ENCODE measurements at regions of chr2 and their contacts with region 1.

Region 1: DNA sequence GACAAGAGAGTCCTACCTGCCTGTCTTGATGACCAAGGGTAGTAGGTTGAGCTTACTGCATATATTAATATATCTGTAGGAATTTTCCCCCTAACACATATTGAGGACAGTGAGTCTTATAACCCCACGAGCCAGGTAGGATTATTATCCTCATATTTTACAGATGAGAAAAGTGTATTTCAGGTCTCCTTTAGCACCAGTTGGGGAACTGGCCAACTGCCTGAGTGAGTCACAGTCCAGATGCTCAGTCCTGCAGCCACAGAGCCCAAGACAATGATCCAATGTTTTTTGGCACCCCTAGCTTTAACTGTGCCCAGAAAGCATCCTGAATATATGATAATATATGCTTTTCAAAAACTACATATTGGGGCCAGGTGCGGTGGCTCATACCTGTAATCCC is 30.8 kb upstream of the GLS start:
- DNase-seq: no peak
- H3K4me3 Mint-ChIP-seq: no peak overlapping the region
- H3K27ac Mint-ChIP-seq: no peak overlapping the region
- H3K4me1 Mint-ChIP-seq: peaks cover 15% of the 10 kb centered on the region
- H3K27me3 Mint-ChIP-seq: peaks cover 1% of the 10 kb centered on the region

Region 2: GRCh38 chr2:190636373-190636772 is 213.4 kb before region 1 on chr2:
- CTCF ChIA-PET with region 1: no interaction called
- POLR2A ChIA-PET with region 1: no interaction called
- intact Hi-C with region 1: no loop called
- DNase-seq: no peak
- H3K4me3 Mint-ChIP-seq: no peak overlapping the region
- H3K27ac Mint-ChIP-seq: no peak overlapping the region
- H3K4me1 Mint-ChIP-seq: peaks cover 10% of the 10 kb centered on the region
- H3K27me3 Mint-ChIP-seq: no peaks in the 10 kb centered on the region

Region 3: GRCh38 chr2:190685333-190685732 is 164.4 kb before region 1 on chr2:
- CTCF ChIA-PET with region 1: no interaction called
- POLR2A ChIA-PET with region 1: no interaction called
- intact Hi-C with region 1: no loop called
- DNase-seq: no peak
- H3K4me3 Mint-ChIP-seq: no peak overlapping the region
- H3K27ac Mint-ChIP-seq: no peak overlapping the region
- H3K4me1 Mint-ChIP-seq: peaks cover 20% of the 10 kb centered on the region
- H3K27me3 Mint-ChIP-seq: no peaks in the 10 kb centered on the region

Region 4: DNA sequence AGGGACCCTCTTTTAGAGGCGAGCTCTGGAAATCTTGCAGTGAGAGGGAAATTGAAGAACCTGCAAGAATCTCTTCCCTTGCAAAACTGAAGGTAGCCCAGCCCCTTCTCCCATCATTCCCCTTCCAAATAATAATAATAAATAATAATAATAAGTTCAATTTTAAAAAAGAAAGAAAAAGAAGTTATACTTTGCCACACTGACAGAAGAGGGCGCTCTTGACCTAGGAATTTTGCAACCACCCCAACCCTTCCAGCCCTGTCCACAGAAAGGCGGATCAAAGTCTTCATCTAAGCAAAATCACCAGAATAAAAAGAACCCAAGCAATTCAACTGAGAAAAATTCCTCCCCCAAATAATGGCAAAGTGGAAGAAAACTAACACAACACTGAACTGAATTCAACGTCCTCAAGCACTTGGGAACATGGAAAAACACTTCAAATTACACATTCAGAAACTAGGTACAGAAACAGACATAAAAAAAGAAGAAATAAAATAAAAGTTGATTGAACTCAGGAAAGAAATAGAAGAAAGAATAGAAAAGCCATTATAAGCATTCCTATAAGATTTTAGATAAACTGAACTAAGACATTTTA is 68.1 kb before region 1 on chr2:
- CTCF ChIA-PET with region 1: interaction called, 13 read pairs
- POLR2A ChIA-PET with region 1: no interaction called
- intact Hi-C with region 1: loop called (anchors 1 kb)
- DNase-seq: peak; percentile 66
- H3K4me3 Mint-ChIP-seq: no peak overlapping the region
- H3K27ac Mint-ChIP-seq: no peak overlapping the region
- H3K4me1 Mint-ChIP-seq: peaks cover 22% of the 10 kb centered on the region
- H3K27me3 Mint-ChIP-seq: peaks cover 9% of the 10 kb centered on the region

Region 5: GRCh38 chr2:190867212-190867611 is 17.4 kb after region 1 on chr2:
- CTCF ChIA-PET with region 1: interaction called, 43 read pairs
- POLR2A ChIA-PET with region 1: no interaction called
- intact Hi-C with region 1: loop called (anchors 1 kb)
- DNase-seq: no peak
- H3K4me3 Mint-ChIP-seq: no peak overlapping the region
- H3K27ac Mint-ChIP-seq: no peak overlapping the region
- H3K4me1 Mint-ChIP-seq: peaks cover 19% of the 10 kb centered on the region
- H3K27me3 Mint-ChIP-seq: no peaks in the 10 kb centered on the region

Region 6: GRCh38 chr2:190887089-190887488 is 37.3 kb after region 1 on chr2:
- CTCF ChIA-PET with region 1: interaction called, 14 read pairs
- POLR2A ChIA-PET with region 1: interaction called, 22 read pairs
- intact Hi-C with region 1: loop called (anchors 1 kb)
- DNase-seq: no peak
- H3K4me3 Mint-ChIP-seq: no peak overlapping the region
- H3K27ac Mint-ChIP-seq: no peak overlapping the region
- H3K4me1 Mint-ChIP-seq: peaks cover 65% of the 10 kb centered on the region
- H3K27me3 Mint-ChIP-seq: no peaks in the 10 kb centered on the region

Region 7: GRCh38 chr2:190893157-190893556 is 43.4 kb after region 1 on chr2:
- CTCF ChIA-PET with region 1: interaction called, 14 read pairs
- POLR2A ChIA-PET with region 1: no interaction called
- intact Hi-C with region 1: no loop called
- DNase-seq: no peak
- H3K4me3 Mint-ChIP-seq: no peak overlapping the region
- H3K27ac Mint-ChIP-seq: peak overlapping the region; percentile 23
- H3K4me1 Mint-ChIP-seq: peaks cover 57% of the 10 kb centered on the region
- H3K27me3 Mint-ChIP-seq: no peaks in the 10 kb centered on the region

Region 8: DNA sequence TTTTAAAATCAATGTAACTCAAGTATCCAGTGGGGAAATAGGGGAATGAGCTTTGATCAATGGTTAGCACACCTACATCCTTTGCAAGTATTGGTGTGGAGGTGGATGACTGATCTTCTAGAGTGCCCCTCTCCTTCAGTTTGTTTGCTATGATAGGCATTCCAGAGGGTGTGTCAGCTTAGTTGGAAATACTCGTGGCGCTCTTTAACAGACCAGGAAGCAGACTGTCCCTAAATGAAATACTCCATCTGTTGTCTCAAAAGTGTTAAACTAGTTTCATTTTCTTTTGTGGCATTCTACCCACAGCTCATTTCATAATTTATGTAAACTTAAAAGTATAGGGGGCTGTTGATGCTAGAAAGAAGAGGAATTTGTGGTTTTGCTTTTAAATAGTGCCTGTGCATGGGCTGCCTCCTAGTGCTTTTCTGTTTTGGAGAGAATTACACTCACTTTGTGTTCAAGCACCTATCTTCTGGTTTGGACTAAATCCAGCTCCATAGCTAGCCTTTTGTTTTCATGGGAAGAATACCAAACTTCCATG is 98.0 kb after region 1 on chr2:
- CTCF ChIA-PET with region 1: interaction called, 18 read pairs
- POLR2A ChIA-PET with region 1: no interaction called
- intact Hi-C with region 1: loop called (anchors 1 kb)
- DNase-seq: no peak
- H3K4me3 Mint-ChIP-seq: no peak overlapping the region
- H3K27ac Mint-ChIP-seq: no peak overlapping the region
- H3K4me1 Mint-ChIP-seq: peaks cover 19% of the 10 kb centered on the region
- H3K27me3 Mint-ChIP-seq: no peaks in the 10 kb centered on the region

Region 9: GRCh38 chr2:191078165-191078867 is 228.5 kb after region 1 on chr2:
- CTCF ChIA-PET with region 1: no interaction called
- POLR2A ChIA-PET with region 1: no interaction called
- intact Hi-C with region 1: no loop called
- DNase-seq: no peak
- H3K4me3 Mint-ChIP-seq: peak overlapping the region; percentile 48
- H3K27ac Mint-ChIP-seq: peak overlapping the region; percentile 69
- H3K4me1 Mint-ChIP-seq: peaks cover 29% of the 10 kb centered on the region
- H3K27me3 Mint-ChIP-seq: no peaks in the 10 kb centered on the region